ENCODE measurements at regions of chr6 and their contacts with region 1.

Region 1: DNA sequence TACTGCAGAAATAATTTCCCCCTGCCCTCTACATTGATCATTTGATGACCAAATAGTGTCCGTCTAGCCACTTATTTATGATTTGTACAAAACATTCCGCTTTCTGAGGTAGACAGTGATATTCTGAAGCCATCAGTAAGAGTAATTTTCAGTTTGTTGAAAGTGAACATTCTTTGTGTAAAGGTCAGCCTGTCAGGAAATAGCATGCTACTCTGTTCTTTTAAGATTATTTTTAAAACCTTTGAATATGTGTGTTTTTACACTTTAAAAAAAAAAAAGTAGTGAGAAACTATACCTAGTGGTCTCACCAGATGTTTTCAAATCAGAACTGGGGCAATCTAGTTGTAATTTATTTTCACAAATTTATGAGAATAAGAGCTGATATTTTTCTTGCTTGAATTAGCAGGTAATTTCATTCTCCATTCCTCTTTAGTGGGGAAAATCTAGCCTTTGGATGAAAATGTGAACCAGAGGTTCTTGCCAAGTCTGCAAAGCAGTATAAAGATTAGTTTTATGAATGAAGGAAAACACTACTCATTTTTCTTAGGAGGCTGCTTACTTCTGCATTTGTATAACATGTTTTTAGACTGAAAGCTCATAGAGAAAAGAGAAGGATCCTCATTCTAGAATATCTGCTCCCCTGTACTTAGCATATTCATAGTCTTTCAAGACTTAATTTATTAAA is 12.1 kb upstream of the REV3L start:
- DNase-seq: no peak
- H3K4me3 ChIP-seq: no peak overlapping the region
- H3K27ac ChIP-seq: peak overlapping the region in 7 of 59 donors; percentile 1 to 16 (median 4)
- H3K27me3 ChIP-seq: no peaks in the 10 kb centered on the region
- CTCF ChIP-seq: no peak

Region 2: DNA sequence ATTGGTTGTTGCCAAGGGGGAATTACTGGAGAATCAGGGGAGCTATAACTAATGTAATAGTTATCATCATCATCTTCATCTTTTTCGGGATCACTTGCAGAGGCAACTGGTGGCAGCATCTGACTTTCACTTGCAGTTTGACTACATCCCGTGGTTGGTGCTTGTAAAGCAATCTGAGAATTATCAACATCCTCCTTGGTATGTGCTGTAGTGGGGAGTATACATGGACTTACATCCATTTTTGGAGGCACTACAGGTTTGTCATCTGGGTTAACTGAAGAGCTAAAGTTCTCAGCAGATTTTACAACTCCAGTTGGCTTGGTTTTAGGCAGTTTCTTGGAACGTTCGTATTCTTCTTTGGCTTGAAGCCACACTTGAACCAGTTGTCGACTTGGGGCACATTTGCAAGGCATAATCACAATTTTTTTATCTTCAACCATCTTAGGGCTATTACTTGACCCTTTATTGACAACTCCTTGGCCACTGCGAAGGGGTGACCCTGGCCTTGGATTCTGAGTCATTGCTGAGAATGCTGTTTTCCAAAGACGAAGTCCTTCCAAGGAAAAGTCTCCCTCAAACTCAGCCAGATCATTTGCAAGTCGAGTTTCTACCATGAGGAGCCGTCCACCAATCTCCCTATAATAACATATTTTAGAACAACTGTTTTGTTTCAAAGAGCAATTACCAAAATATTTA is 127.6 kb before region 1 on chr6:
- intact Hi-C with region 1: no loop called
- DNase-seq: no peak
- H3K4me3 ChIP-seq: no peak overlapping the region
- H3K27ac ChIP-seq: no peak overlapping the region
- H3K27me3 ChIP-seq: no peaks in the 10 kb centered on the region
- CTCF ChIP-seq: no peak

Region 3: GRCh38 chr6:111524735-111525134 is 29.6 kb after region 1 on chr6:
- intact Hi-C with region 1: loop called in 1 of 2 experiments (anchors 5 kb)
- DNase-seq: no peak
- H3K4me3 ChIP-seq: peak overlapping the region in 23 of 59 donors; percentile 6 to 54 (median 26)
- H3K27ac ChIP-seq: peak overlapping the region in 47 of 59 donors; percentile 1 to 91 (median 67)
- H3K27me3 ChIP-seq: no peaks in the 10 kb centered on the region
- CTCF ChIP-seq: no peak

Region 4: GRCh38 chr6:111536910-111537527 is 41.9 kb after region 1 on chr6:
- intact Hi-C with region 1: no loop called
- DNase-seq: no peak
- H3K4me3 ChIP-seq: no peak overlapping the region
- H3K27ac ChIP-seq: peak overlapping the region in 14 of 59 donors; percentile 4 to 48 (median 24)
- H3K27me3 ChIP-seq: no peaks in the 10 kb centered on the region
- CTCF ChIP-seq: no peak

Region 5: GRCh38 chr6:111727802-111728201 is 232.7 kb after region 1 on chr6:
- intact Hi-C with region 1: no loop called
- DNase-seq: no peak
- H3K4me3 ChIP-seq: no peak overlapping the region
- H3K27ac ChIP-seq: peak overlapping the region in 15 of 59 donors; percentile 1 to 66 (median 18)
- H3K27me3 ChIP-seq: no peaks in the 10 kb centered on the region
- CTCF ChIP-seq: peak in 46 of 56 donors; percentile 9 to 62 (median 38)

Region 6: GRCh38 chr6:112268654-112269053 is 773.6 kb after region 1 on chr6:
- intact Hi-C with region 1: no loop called
- DNase-seq: no peak
- H3K4me3 ChIP-seq: no peak overlapping the region
- H3K27ac ChIP-seq: peak overlapping the region in 1 of 59 donors; percentile 35
- H3K27me3 ChIP-seq: no peaks in the 10 kb centered on the region
- CTCF ChIP-seq: no peak

Measured in dorsolateral prefrontal cortex (tissue), 120 donors.